GM10248 (cell line): ENCODE measurements at regions of chr1 and their contacts with region 1.

Region 1: GRCh38 chr1:1250786-1251284 is 4.3 kb upstream of the C1QTNF12 start:
- DNase-seq: peak; percentile 83
- CTCF ChIP-seq: no peak

Region 2: GRCh38 chr1:1116701-1117465 is 134.0 kb before region 1 on chr1:
- CTCF ChIA-PET with region 1: interaction called, 54 read pairs
- POLR2A ChIA-PET with region 1: interaction called, 4 read pairs
- DNase-seq: no peak
- CTCF ChIP-seq: no peak

Region 3: DNA sequence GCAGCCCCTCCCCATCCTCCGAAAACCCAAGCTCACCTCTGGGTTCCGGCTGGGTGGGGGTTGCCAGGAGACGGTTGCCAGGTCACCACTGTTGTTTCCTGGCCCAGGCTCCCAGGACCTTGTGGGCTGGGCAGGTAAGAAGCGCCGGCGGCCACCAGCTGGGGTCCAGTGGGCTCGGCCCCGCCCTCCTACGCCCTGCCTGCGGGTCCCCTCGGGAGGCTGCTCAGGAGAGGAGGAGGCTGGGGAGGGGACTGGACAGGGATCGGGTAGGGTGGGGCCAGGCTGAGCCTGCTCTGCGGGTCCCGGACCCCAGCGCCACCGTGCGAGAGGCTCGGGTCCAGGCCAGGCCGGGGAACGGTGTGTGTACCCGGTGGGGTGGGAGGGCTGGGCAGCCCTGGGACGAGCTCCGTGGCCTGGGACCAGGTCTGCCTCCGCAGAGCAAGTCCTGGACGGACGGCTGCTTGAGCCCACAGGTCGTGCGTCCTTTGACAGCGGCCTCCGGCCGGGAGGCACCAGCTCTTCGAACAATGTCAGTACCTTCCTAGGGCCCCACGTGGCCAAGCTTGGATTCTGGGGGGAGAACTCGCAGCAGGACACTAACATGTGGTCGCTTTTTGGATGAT is 76.9 kb before region 1 on chr1 and contains the start of gene TTLL10:
- CTCF ChIA-PET with region 1: no interaction called
- POLR2A ChIA-PET with region 1: no interaction called
- DNase-seq: no peak
- CTCF ChIP-seq: no peak

Region 4: DNA sequence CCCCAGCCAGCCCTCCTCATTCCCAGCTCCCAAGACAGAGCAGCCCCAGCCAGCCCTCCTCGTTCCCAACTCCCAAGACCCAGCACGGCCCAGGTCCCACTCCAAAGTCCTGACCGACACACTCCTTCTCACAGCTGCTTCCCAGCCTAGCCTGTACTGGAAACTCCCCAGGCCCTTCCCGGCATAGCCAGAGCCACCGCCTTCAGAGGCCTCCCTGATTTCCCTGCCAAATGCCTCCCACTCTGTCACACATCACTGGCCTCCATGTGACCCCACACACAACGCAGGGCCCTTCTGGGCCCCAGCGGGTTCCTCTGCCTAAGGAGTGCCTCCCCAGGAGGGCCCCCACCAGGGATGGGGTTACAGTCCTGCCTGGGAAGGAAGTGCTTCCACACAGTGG is 20.0 kb after region 1 on chr1:
- CTCF ChIA-PET with region 1: interaction called, 11 read pairs
- POLR2A ChIA-PET with region 1: interaction called, 3 read pairs
- DNase-seq: no peak
- CTCF ChIP-seq: no peak